Calu3 (cell line): ENCODE measurements at regions of chr13 and their contacts with region 1.

Region 1: DNA sequence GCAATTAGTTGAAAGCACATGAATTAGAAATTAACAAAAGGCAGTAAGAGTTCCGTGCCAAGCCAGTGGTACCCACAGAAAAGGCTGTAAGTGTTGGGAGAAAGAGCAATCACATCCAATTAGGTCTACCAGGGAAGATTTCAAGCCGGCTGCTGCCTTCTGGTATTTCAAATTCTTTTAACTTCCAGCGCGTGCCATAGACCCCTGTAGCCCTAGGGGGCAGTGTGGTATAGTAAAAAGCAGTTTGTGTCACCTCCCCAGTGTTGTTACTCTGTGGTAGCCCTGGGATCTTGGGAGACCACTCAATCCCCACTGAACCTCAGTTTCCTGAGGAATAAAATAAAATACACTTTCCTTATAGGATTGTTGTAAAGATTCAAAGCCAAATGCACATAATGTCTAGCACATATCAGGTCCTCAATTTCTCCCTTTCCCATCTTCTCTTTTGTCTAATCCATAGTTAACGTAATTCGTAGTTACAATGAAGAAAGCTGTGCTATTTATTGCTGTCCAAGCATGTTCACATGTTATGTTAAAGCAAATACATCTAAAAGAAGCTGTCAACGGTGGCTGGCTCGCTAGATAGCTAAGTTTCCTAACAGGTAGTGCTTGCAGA is 230.2 kb downstream of the TDRD3 start:
- DNase-seq: peak; percentile 8
- H3K4me3 Mint-ChIP-seq: no peak overlapping the region
- H3K27ac Mint-ChIP-seq: no peak overlapping the region
- H3K4me1 Mint-ChIP-seq: no peaks in the 10 kb centered on the region
- H3K27me3 Mint-ChIP-seq: no peaks in the 10 kb centered on the region
- CTCF ChIP-seq: no peak

Region 2: DNA sequence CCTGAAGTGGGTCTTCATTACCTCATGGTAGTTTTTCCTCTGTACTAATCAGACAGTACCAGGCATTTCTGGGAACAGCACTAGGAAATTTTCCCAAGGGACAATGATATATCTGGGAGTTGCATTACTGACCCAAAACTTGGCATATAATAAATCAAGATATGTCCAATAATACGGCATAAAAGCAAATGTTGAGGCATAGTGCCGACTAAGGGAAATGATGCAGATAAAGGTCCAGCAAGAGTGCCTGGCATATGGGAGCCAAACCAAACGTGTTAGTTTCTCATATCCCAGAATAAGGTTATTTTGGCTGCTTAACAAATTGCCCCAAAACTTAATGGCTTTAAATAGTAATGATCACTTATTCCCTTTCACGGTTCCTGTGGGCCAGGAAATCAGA is 242.3 kb before region 1 on chr13:
- CTCF ChIA-PET with region 1: no interaction called
- intact Hi-C with region 1: no loop called
- DNase-seq: no peak
- H3K4me3 Mint-ChIP-seq: no peak overlapping the region
- H3K27ac Mint-ChIP-seq: no peak overlapping the region
- H3K4me1 Mint-ChIP-seq: no peaks in the 10 kb centered on the region
- H3K27me3 Mint-ChIP-seq: no peaks in the 10 kb centered on the region
- CTCF ChIP-seq: no peak

Region 3: GRCh38 chr13:60494296-60494695 is 132.9 kb before region 1 on chr13:
- CTCF ChIA-PET with region 1: no interaction called
- intact Hi-C with region 1: no loop called
- DNase-seq: no peak
- H3K4me3 Mint-ChIP-seq: no peak overlapping the region
- H3K27ac Mint-ChIP-seq: no peak overlapping the region
- H3K4me1 Mint-ChIP-seq: no peaks in the 10 kb centered on the region
- H3K27me3 Mint-ChIP-seq: no peaks in the 10 kb centered on the region
- CTCF ChIP-seq: no peak

Region 4: GRCh38 chr13:61406275-61406674 is 779.1 kb after region 1 on chr13:
- CTCF ChIA-PET with region 1: no interaction called
- intact Hi-C with region 1: loop called (anchors 5 kb)
- DNase-seq: no peak
- H3K4me3 Mint-ChIP-seq: no peak overlapping the region
- H3K27ac Mint-ChIP-seq: no peak overlapping the region
- H3K4me1 Mint-ChIP-seq: no peaks in the 10 kb centered on the region
- H3K27me3 Mint-ChIP-seq: no peaks in the 10 kb centered on the region
- CTCF ChIP-seq: no peak